ENCODE measurements at regions of chr2 and their contacts with region 1.

Region 1: DNA sequence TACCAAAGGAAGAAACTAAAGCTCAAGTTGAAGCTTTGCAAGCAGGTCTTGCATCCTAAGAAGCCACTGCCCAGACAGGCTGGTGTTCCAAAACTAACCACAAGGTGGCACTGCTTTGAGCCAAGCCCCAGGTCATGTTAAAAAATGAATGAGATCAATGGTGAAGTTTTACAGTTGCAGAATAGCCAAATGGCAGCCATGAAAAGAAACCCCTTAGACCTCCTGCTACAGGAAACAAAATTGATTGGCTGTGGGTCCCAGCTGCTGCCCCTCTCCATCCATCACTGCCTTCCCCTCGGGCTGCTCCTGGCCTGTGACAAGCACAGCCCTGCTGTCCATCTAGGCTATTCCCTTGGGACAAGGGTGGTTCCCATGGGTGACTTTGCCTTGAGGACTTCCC is 20.7 kb upstream of the MREG start:
- DNase-seq: peak; percentile 92
- ATAC-seq: peak; percentile 76
- H3K4me3 Mint-ChIP-seq: no peak overlapping the region
- H3K27ac Mint-ChIP-seq: no peak overlapping the region
- H3K4me1 Mint-ChIP-seq: peaks cover 44% of the 10 kb centered on the region
- H3K27me3 Mint-ChIP-seq: no peaks in the 10 kb centered on the region
- CTCF ChIP-seq: peak; percentile 87

Region 2: GRCh38 chr2:215912299-215912842 is 121.7 kb before region 1 on chr2:
- CTCF ChIA-PET with region 1: no interaction called
- POLR2A ChIA-PET with region 1: no interaction called
- intact Hi-C with region 1: no loop called
- DNase-seq: no peak
- ATAC-seq: no peak
- H3K4me3 Mint-ChIP-seq: no peak overlapping the region
- H3K27ac Mint-ChIP-seq: no peak overlapping the region
- H3K4me1 Mint-ChIP-seq: no peaks in the 10 kb centered on the region
- H3K27me3 Mint-ChIP-seq: peaks cover 13% of the 10 kb centered on the region
- CTCF ChIP-seq: no peak

Region 3: DNA sequence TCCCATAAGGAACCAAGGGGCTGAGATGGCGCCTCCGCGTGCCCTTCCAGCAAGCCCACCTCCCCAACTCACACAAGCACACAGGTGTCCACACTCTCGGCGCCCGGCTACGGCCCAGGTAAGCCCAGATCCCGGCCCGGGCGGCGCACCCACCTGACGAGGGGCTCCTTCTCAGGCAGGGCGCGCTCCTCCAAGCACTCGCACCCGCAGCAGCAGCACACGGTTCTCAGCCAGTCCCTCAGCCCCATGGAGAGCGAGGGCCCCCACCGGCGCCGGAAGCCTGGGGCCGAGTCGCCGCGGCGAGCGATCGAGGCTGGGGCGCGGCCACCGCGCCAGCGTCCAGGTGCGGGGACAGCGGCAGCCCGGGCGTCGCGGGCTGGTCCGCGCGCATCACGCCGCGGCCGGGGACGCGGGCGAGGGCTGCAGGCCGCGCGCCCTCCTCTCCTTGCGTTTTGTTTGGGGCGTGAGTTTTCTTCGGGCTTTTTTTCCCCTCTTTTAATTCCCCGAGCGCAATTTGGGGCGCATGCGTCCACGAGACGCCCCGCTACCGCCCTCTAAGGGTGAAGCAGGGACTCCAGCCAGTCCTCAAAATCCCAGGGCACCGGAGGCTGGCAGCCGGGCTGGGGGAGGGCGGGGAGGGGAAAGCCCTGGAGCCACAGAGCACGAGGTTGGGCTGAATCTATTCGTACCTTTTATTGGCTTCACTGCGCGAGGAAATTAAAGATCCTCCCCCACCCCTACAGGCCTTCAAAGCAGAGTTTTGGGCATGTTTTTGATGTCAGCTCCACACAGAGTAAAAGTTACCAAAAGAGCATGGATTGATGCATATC is 20.8 kb before region 1 on chr2 and contains the start of gene MREG:
- CTCF ChIA-PET with region 1: interaction called, 67 read pairs
- POLR2A ChIA-PET with region 1: interaction called, 8 read pairs
- intact Hi-C with region 1: no loop called
- DNase-seq: peak; percentile 90
- ATAC-seq: peak; percentile 76
- H3K4me3 Mint-ChIP-seq: peak within 1 kb of the TSS; percentile 93
- H3K27ac Mint-ChIP-seq: peak within 1 kb of the TSS; percentile 79
- H3K4me1 Mint-ChIP-seq: peaks cover 64% of the 10 kb centered on the region
- H3K27me3 Mint-ChIP-seq: no peaks in the 10 kb centered on the region
- CTCF ChIP-seq: peak; percentile 68
- total RNA-seq, gene MREG: 8.0 to 10.9 TPM

Region 4: GRCh38 chr2:216044883-216045486 is 10.9 kb after region 1 on chr2:
- CTCF ChIA-PET with region 1: interaction called, 12 read pairs
- POLR2A ChIA-PET with region 1: interaction called, 4 read pairs
- intact Hi-C with region 1: no loop called
- DNase-seq: no peak
- ATAC-seq: peak; percentile 61
- H3K4me3 Mint-ChIP-seq: no peak overlapping the region
- H3K27ac Mint-ChIP-seq: no peak overlapping the region
- H3K4me1 Mint-ChIP-seq: peaks cover 8% of the 10 kb centered on the region
- H3K27me3 Mint-ChIP-seq: no peaks in the 10 kb centered on the region
- CTCF ChIP-seq: no peak

Region 5: GRCh38 chr2:216071111-216071851 is 37.2 kb after region 1 on chr2:
- CTCF ChIA-PET with region 1: interaction called, 11 read pairs
- POLR2A ChIA-PET with region 1: no interaction called
- intact Hi-C with region 1: no loop called
- DNase-seq: no peak
- ATAC-seq: no peak
- H3K4me3 Mint-ChIP-seq: no peak overlapping the region
- H3K27ac Mint-ChIP-seq: no peak overlapping the region
- H3K4me1 Mint-ChIP-seq: peaks cover 32% of the 10 kb centered on the region
- H3K27me3 Mint-ChIP-seq: no peaks in the 10 kb centered on the region
- CTCF ChIP-seq: no peak

Region 6: GRCh38 chr2:216114714-216115557 is 80.9 kb after region 1 on chr2:
- CTCF ChIA-PET with region 1: interaction called, 40 read pairs
- POLR2A ChIA-PET with region 1: interaction called, 17 read pairs
- intact Hi-C with region 1: loop called (anchors 5 kb)
- DNase-seq: peak; percentile 99
- ATAC-seq: peak; percentile 85
- H3K4me3 Mint-ChIP-seq: peak overlapping the region; percentile 96
- H3K27ac Mint-ChIP-seq: peak overlapping the region; percentile 98
- H3K4me1 Mint-ChIP-seq: peaks cover 90% of the 10 kb centered on the region
- H3K27me3 Mint-ChIP-seq: no peaks in the 10 kb centered on the region
- CTCF ChIP-seq: peak; percentile 88

Region 7: GRCh38 chr2:216206041-216206703 is 172.1 kb after region 1 on chr2:
- CTCF ChIA-PET with region 1: no interaction called
- POLR2A ChIA-PET with region 1: no interaction called
- intact Hi-C with region 1: no loop called
- DNase-seq: no peak
- ATAC-seq: peak; percentile 88
- H3K4me3 Mint-ChIP-seq: no peak overlapping the region
- H3K27ac Mint-ChIP-seq: peak overlapping the region; percentile 90
- H3K4me1 Mint-ChIP-seq: peaks cover 63% of the 10 kb centered on the region
- H3K27me3 Mint-ChIP-seq: no peaks in the 10 kb centered on the region
- CTCF ChIP-seq: no peak